ENCODE measurements at regions of chr7 and their contacts with region 1.

Region 1: GRCh38 chr7:137454246-137454724 is 110.8 kb upstream of the PTN start:
- DNase-seq: no peak
- ATAC-seq: peak; percentile 56 to 81
- H3K4me3 ChIP-seq: no peak overlapping the region
- H3K27ac ChIP-seq: no peak overlapping the region
- H3K4me1 ChIP-seq: peaks cover 7% of the 10 kb centered on the region
- H3K27me3 ChIP-seq: no peaks in the 10 kb centered on the region
- CTCF ChIP-seq: peak; percentile 65

Region 2: DNA sequence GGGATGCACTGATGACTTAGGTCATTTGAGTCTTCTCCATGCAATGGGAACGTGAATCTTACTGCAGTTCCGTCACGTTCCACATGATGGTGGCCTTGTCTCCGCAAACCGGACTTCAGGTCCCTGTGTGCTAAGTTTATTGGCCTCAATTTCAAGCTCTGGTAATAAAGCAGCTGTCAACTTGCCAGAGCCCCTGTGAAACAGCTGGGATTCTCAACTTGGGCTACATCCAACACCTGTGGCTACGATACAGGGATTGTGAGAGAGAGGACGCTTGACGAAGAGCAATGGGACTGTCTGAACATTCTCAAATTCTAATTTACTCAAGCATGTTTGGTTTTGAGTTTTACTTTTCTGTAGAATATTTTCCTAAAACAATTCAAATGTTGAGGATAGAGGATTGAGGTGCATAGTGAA is 285.0 kb before region 1 on chr7:
- intact Hi-C with region 1: loop called (anchors 10 kb)
- DNase-seq: no peak
- ATAC-seq: peak in 1 of 2 donors; percentile 63
- H3K4me3 ChIP-seq: no peak overlapping the region
- H3K27ac ChIP-seq: no peak overlapping the region
- H3K4me1 ChIP-seq: no peaks in the 10 kb centered on the region
- H3K27me3 ChIP-seq: no peaks in the 10 kb centered on the region
- CTCF ChIP-seq: peak; percentile 50

Measured in lower lobe of right lung (tissue), 2 donors.